HCT116 (cell line): ENCODE measurements at regions of chr12 and their contacts with region 1.

Region 1: GRCh38 chr12:85642810-85643209 is 193.4 kb downstream of the RASSF9 start:
- DNase-seq: no peak
- ATAC-seq: no peak
- H3K4me3 ChIP-seq: no peak overlapping the region
- H3K27ac ChIP-seq: no peak overlapping the region
- H3K4me1 ChIP-seq: no peaks in the 10 kb centered on the region
- H3K27me3 ChIP-seq: no peaks in the 10 kb centered on the region
- CTCF ChIP-seq: peak in 2 of 3 experiments; percentile 14 to 25; a peak in 3 of 6 replicates
- POLR2A ChIP-seq: no peak
- RAD21 ChIP-seq: peak; percentile 29; the same call in 1 of the 2 replicates

Region 2: GRCh38 chr12:85669911-85670310 is 27.1 kb after region 1 on chr12:
- CTCF ChIA-PET with region 1: no interaction called
- POLR2A ChIA-PET with region 1: no interaction called
- RAD21 ChIA-PET with region 1: no interaction called
- intact Hi-C with region 1: loop called (anchors 2 kb)
- DNase-seq: no peak
- ATAC-seq: no peak
- H3K4me3 ChIP-seq: no peak overlapping the region
- H3K27ac ChIP-seq: no peak overlapping the region
- H3K4me1 ChIP-seq: no peaks in the 10 kb centered on the region
- H3K27me3 ChIP-seq: no peaks in the 10 kb centered on the region
- CTCF ChIP-seq: no peak
- POLR2A ChIP-seq: no peak
- RAD21 ChIP-seq: no peak